ENCODE measurements at regions of chr6 and their contacts with region 1.

Region 1: DNA sequence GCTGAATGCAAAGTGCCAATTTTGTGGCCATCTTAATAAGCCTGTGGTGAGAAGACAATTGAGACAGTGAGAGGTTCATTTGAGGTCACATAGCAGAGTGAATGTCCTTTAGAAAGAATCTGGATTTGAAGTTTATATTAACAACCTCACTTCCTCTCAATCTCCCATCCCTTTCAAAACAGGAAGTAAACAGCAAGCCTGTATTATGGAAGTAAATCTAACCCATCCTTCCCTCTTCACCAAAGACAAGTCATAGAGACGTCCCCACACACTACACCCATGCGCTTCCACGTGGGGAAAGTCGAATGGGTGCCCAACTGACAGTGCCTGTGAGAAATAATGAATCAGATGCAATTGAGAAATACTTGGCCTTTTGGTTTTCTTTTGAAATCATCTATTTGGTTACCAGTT is 28.8 kb upstream of the CCND3 start:
- DNase-seq: no peak
- H3K4me3 Mint-ChIP-seq: peak overlapping the region; percentile 32
- H3K27ac Mint-ChIP-seq: peak overlapping the region; percentile 90
- H3K4me1 Mint-ChIP-seq: peaks cover 36% of the 10 kb centered on the region
- H3K27me3 Mint-ChIP-seq: no peaks in the 10 kb centered on the region

Region 2: DNA sequence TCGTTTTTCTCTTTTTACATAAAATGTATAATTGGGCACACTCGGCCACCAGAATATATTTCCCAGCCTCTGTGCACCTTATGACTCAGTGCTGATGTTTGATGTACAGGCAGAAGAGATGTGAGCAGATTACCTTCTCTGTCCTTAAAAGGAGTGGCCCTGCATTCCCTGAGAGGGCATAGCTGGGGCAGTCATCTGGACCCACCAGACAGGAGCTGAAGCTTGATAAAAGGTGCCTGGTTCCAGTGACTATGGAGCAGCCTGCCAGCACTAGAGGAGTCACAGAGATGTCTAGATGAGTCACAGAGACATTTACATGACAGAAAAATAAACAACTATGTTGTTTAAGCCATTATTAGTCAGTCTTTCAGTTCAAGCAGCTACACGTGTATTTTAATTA is 1799.1 kb before region 1 on chr6:
- intact Hi-C with region 1: no loop called
- DNase-seq: no peak
- H3K4me3 Mint-ChIP-seq: no peak overlapping the region
- H3K27ac Mint-ChIP-seq: no peak overlapping the region
- H3K4me1 Mint-ChIP-seq: no peaks in the 10 kb centered on the region
- H3K27me3 Mint-ChIP-seq: peaks cover 2% of the 10 kb centered on the region

Region 3: DNA sequence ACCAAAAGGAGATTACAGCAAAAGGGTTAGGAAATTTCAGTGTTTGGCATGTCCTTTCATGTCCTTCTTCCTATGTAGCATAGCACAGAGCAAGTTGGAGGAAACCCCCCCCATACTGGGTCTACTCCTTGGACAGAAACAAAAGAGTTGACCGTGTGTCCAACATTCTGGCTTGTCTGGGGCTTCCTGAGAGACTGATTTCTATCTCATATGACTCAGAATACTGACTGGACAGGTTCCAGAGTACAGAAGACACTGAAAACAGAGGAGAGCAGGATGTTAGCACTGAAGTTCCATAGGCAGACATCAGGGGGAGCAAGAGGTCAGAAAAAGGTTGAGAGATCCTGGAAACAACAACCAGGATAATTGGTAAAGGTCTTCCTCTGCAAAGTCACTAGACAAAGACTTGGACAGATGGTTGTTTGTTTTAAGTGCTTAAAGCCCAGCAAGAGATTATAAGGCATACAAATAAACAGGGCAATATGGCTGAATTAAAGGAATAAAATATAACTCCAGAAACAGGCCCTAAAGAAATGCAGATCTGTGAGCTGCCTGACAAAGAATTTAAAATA is 123.7 kb before region 1 on chr6:
- intact Hi-C with region 1: no loop called
- DNase-seq: peak; percentile 90
- H3K4me3 Mint-ChIP-seq: no peak overlapping the region
- H3K27ac Mint-ChIP-seq: no peak overlapping the region
- H3K4me1 Mint-ChIP-seq: peaks cover 10% of the 10 kb centered on the region
- H3K27me3 Mint-ChIP-seq: no peaks in the 10 kb centered on the region

Region 4: GRCh38 chr6:41941280-41942066 is 29.0 kb before region 1 on chr6 and contains the start of gene CCND3:
- intact Hi-C with region 1: loop called (anchors 2 kb)
- DNase-seq: peak; percentile 97
- H3K4me3 Mint-ChIP-seq: peak within 1 kb of the TSS; percentile 100
- H3K27ac Mint-ChIP-seq: peak within 1 kb of the TSS; percentile 96
- H3K4me1 Mint-ChIP-seq: peaks cover 46% of the 10 kb centered on the region
- H3K27me3 Mint-ChIP-seq: no peaks in the 10 kb centered on the region
- total RNA-seq, gene CCND3: 483 and 491 TPM in 2 replicates